ENCODE measurements at regions of chr2 and their contacts with region 1.

Region 1: GRCh38 chr2:202643012-202643858 is 8.5 kb downstream of the FAM117B start:
- DNase-seq: no peak
- H3K4me3 Mint-ChIP-seq: peak overlapping the region; percentile 70
- H3K27ac Mint-ChIP-seq: no peak overlapping the region
- H3K4me1 Mint-ChIP-seq: peaks cover 60% of the 10 kb centered on the region
- H3K27me3 Mint-ChIP-seq: no peaks in the 10 kb centered on the region

Region 2: GRCh38 chr2:202307690-202308089 is 335.5 kb before region 1 on chr2:
- CTCF ChIA-PET with region 1: no interaction called
- intact Hi-C with region 1: no loop called
- DNase-seq: no peak
- H3K4me3 Mint-ChIP-seq: no peak overlapping the region
- H3K27ac Mint-ChIP-seq: no peak overlapping the region
- H3K4me1 Mint-ChIP-seq: peaks cover 4% of the 10 kb centered on the region
- H3K27me3 Mint-ChIP-seq: no peaks in the 10 kb centered on the region

Region 3: DNA sequence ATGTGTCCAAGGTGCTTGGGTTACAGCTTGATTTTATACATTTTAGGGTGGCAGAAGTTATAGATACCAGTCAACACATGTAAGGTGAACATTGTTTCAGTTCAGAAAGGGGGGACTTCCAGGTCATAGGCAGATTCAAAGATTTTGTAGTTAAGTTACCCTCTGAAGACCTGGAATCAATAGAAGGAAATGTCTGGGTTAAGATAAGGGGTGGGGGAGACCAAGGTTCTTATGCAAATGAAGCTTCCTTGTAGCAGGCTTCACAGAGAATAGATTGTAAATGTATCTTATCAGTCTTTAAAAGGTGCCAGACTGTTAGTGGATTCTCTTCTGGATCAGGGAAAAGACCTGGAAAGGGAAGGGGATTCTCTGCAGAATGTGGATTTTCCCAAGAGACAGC is 224.7 kb before region 1 on chr2:
- CTCF ChIA-PET with region 1: no interaction called
- intact Hi-C with region 1: no loop called
- DNase-seq: no peak
- H3K4me3 Mint-ChIP-seq: no peak overlapping the region
- H3K27ac Mint-ChIP-seq: no peak overlapping the region
- H3K4me1 Mint-ChIP-seq: no peaks in the 10 kb centered on the region
- H3K27me3 Mint-ChIP-seq: no peaks in the 10 kb centered on the region

Region 4: DNA sequence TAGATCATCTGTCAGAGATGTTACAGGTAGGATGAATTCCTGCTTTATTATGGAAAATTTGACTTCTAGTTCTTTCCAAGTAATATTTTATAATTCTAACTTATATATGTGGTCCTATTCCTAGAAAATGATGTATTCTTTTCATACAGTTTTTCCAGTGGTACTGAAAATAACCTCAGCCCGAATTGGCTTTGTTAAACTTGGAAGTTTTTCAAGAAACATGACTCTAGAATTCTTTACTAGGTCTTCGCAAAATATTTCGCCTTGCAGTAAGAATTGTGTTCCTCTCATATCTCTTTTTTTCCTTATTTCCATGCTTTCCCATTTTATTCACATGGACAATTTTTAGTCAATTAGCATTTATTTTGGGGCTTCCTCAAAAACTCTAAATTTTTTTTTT is 206.6 kb before region 1 on chr2:
- CTCF ChIA-PET with region 1: no interaction called
- intact Hi-C with region 1: no loop called
- DNase-seq: no peak
- H3K4me3 Mint-ChIP-seq: no peak overlapping the region
- H3K27ac Mint-ChIP-seq: no peak overlapping the region
- H3K4me1 Mint-ChIP-seq: no peaks in the 10 kb centered on the region
- H3K27me3 Mint-ChIP-seq: no peaks in the 10 kb centered on the region

Region 5: GRCh38 chr2:202555356-202555755 is 87.9 kb before region 1 on chr2:
- CTCF ChIA-PET with region 1: no interaction called
- intact Hi-C with region 1: no loop called
- DNase-seq: peak; percentile 21
- H3K4me3 Mint-ChIP-seq: no peak overlapping the region
- H3K27ac Mint-ChIP-seq: no peak overlapping the region
- H3K4me1 Mint-ChIP-seq: no peaks in the 10 kb centered on the region
- H3K27me3 Mint-ChIP-seq: no peaks in the 10 kb centered on the region

Region 6: DNA sequence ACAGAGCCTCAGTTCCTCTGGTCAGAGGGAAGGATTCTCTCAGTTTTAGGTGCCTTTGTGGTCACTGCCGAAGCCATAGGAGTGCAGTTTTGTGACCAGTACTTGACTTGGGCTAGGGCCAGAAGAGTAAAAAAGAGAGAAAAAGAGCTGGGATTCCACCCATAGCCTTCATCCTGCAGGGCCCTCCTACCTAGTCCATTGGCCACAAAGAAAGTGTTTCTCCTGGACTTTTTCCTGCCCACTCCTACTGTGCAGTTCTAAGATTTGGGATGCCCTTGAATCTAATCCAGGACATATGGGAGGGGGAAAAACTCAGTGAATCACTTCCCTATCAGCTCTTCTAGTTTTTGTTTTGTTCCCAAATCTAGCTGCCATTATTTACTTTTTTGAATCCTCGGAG is 17.6 kb after region 1 on chr2:
- CTCF ChIA-PET with region 1: interaction called, 7 read pairs
- intact Hi-C with region 1: loop called (anchors 1 kb)
- DNase-seq: no peak
- H3K4me3 Mint-ChIP-seq: no peak overlapping the region
- H3K27ac Mint-ChIP-seq: no peak overlapping the region
- H3K4me1 Mint-ChIP-seq: peaks cover 84% of the 10 kb centered on the region
- H3K27me3 Mint-ChIP-seq: no peaks in the 10 kb centered on the region

Region 7: DNA sequence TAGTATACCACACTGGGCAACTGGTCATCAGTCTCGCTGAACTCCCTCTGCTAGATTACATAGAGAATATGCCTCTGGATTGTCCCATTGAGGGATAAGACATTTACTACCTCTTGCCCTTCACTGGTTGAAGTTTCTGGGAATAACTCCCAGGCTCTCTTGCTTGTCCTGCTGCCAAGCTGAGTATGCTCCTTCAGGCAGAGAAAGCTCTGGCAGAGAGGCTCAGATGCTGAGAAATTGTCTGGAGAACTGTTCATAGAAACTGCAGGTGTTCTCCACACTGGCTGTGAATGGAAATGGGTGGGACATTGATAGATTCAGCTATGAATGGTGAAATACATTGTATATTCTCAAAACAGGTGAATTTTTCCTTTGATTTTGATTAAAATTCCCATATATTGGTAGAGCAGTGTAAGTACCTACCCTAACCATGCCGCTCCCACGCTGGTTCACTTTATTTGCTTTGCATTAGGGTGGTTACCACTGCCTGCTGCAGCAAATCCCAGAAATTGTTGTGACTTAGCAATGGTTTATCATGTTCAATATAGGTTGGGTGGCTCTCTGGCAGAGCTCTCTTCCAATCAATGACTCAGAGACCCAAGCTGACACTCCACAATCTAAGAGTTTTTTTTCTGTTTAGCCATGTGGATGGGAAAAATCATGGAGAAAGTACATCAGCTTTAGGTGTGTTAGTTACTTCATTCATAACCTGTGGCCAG is 28.2 kb after region 1 on chr2:
- CTCF ChIA-PET with region 1: interaction called, 3 read pairs
- intact Hi-C with region 1: loop called (anchors 1 kb)
- DNase-seq: no peak
- H3K4me3 Mint-ChIP-seq: no peak overlapping the region
- H3K27ac Mint-ChIP-seq: no peak overlapping the region
- H3K4me1 Mint-ChIP-seq: peaks cover 80% of the 10 kb centered on the region
- H3K27me3 Mint-ChIP-seq: no peaks in the 10 kb centered on the region

Region 8: GRCh38 chr2:202780514-202781021 is 137.3 kb after region 1 on chr2:
- CTCF ChIA-PET with region 1: no interaction called
- intact Hi-C with region 1: loop called (anchors 1 kb)
- DNase-seq: peak; percentile 18
- H3K4me3 Mint-ChIP-seq: no peak overlapping the region
- H3K27ac Mint-ChIP-seq: no peak overlapping the region
- H3K4me1 Mint-ChIP-seq: peaks cover 15% of the 10 kb centered on the region
- H3K27me3 Mint-ChIP-seq: no peaks in the 10 kb centered on the region

Measured in activated naive CD4-positive, alpha-beta T cell treated with anti-CD3 and anti-CD28 coated beads for 36 hours (primary cell).